Esophagus muscularis mucosa (tissue), 4 donors: ENCODE measurements at regions of chr16 and their contacts with region 1.

Region 1: DNA sequence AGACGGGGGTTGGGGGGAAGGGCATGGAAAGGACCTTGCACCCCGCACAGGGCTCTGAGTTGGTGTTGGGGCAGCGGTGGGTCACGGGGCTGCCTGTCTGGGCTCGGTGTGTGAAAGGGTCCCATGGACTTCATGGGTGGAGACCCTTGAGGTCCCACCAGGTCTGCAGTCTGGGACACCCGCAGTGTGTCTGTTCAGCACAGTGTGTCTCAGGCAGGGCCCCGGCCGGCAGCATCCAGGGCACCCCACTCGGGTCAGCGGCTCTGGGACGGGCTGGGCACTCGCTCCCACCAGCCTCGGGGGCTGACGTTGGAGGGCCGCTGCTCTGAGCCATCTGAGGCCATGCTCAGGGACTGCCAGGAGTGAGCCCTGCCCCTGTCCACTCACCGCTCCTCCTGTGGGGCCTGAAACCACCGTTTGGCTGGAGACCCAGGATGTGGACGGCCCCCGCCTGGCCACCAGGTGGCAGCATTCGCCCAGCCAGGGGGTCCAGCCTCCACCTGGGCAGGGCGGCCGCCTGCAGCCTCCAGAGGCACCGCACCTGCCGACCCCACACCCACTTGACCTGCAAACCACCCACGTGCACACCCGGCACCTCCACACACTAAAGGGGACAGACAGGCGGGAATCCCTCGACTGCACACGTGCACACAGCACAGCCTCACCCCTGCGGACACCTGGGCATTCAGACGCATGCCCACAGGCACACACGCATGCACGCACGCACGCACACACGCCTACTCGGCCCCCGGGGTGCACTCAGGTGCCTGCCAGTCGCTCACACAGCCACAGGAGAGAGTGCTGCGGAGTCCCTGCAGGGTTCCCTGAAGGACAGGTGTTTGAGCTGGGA is 10.1 kb upstream of the ZFPM1 start:
- DNase-seq: no peak
- H3K4me3 ChIP-seq: no peak overlapping the region
- H3K27ac ChIP-seq: no peak overlapping the region
- H3K4me1 ChIP-seq: peaks cover 0 to 11% (median 8%) of the 10 kb centered on the region in 4 donors
- H3K27me3 ChIP-seq: peaks cover 0 to 25% (median 0%) of the 10 kb centered on the region in 4 donors
- CTCF ChIP-seq: peak in 2 of 3 experiments; percentile 92 to 95
- EP300 ChIP-seq: no peak
- POLR2A ChIP-seq: no peak

Region 2: GRCh38 chr16:88527186-88527936 is 84.4 kb after region 1 on chr16:
- intact Hi-C with region 1: loop called (anchors 1 kb)
- DNase-seq: no peak
- H3K4me3 ChIP-seq: no peak overlapping the region
- H3K27ac ChIP-seq: no peak overlapping the region
- H3K4me1 ChIP-seq: peaks cover 27 to 60% (median 41%) of the 10 kb centered on the region in 4 donors
- H3K27me3 ChIP-seq: peaks cover 0 to 46% (median 14%) of the 10 kb centered on the region in 4 donors
- CTCF ChIP-seq: peak; percentile 79 to 93 (median 81)
- EP300 ChIP-seq: no peak
- POLR2A ChIP-seq: no peak

Region 3: DNA sequence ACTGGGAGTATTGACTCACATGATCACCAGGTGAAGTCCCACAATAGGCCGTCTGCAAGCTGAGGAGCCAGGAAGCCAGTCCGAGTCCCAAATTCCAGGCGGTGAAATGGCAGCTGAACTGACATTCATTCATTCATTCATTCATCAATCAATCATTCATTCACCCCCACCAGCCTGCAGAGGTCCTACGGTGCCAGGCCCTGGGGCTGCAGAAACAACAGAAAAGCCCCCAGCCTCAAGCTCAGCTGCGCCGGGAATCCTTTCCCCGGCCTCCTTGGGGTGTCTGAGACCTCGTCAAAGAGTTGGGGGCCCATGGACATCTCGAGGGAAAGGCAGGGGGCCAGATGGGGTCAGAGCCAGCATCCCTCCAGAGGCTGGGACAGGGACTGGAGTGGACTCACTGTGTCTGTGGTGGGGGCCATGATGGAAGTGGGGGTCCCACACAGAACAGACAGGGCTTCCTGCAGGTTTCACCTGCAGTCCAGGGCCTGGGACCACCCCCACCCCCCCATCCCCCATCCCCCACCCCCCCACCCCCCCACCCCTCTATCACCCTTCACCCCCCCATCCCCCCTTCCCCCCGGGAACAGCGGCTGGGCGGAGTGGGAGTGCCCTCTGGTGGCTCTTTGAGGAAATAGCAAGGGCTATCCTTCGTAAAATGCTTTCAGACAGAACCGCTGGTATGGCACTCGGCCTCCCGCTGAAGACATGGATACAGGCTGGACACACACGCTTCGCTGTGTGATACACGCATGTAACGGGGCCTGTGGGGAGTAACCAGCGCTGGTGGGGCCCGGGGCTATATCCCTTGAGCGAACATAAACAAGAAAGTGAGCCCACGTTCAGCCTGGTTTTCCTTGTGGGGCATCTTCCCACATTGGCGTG is 118.8 kb after region 1 on chr16:
- intact Hi-C with region 1: loop called (anchors 5 kb)
- DNase-seq: no peak
- H3K4me3 ChIP-seq: peak overlapping the region; percentile 26 to 46 (median 34)
- H3K27ac ChIP-seq: no peak overlapping the region
- H3K4me1 ChIP-seq: peaks cover 8 to 20% (median 14%) of the 10 kb centered on the region in 4 donors
- H3K27me3 ChIP-seq: peaks cover 0 to 40% (median 2%) of the 10 kb centered on the region in 4 donors
- CTCF ChIP-seq: peak; percentile 59 to 67 (median 67)
- EP300 ChIP-seq: no peak
- POLR2A ChIP-seq: no peak